ENCODE measurements at regions of chr19 and their contacts with region 1.

Region 1: DNA sequence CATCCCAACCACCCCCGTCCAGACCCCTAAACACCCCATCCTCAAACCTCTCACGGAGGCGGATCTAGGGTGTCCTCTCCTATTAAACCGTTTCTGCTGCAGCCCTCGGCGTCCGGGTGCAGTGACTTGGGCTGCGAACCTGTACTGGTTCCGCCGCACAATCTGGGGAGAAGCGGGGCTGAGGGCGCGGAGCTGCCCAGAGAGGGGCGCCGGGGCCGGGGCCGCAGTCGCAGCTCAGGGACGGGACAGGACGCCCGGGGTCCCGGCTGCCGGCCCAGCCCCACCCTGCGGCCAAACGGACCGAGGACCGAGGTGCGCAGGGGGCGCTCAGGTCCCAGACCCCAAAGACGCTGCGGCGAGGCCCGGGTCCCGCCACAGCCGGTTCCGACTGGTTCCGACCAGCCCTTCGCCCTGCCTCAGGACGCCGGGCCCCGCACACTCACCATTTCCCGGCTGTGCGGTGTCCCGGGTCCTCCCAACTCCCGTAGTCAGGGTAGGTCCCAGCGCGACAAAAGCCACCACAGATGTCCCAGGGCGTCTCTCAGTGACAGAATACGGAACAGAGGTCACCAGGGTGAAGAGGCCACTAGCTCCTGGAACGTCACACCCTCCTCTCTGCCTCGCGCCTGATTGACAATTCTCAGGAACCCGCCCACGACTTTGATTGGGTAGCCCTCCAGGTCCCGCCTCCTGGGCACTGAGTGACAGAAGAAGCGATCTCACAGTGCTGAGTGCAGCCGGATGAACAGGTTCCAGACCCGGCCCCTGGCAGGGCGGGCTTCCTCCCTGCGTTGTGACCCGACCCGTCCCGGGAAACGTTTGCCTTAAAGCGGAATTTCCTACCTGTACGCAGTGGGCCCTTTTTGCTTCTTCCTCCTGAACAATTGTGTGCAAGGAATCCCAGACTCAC is at the start of gene ZNF44:
- DNase-seq: peak; percentile 100
- H3K4me3 ChIP-seq: peak within 1 kb of the TSS; percentile 84 to 96 (median 92)
- H3K27ac ChIP-seq: peak within 1 kb of the TSS; percentile 90 to 98 (median 94)
- H3K4me1 ChIP-seq: peaks cover 25 to 51% (median 40%) of the 10 kb centered on the region in 4 donors
- H3K27me3 ChIP-seq: no peaks in the 10 kb centered on the region
- CTCF ChIP-seq: no peak
- EP300 ChIP-seq: no peak
- POLR2A ChIP-seq: no peak
- total RNA-seq, gene ZNF44: 8.8 to 9.7 (median 9.4) TPM

Region 2: DNA sequence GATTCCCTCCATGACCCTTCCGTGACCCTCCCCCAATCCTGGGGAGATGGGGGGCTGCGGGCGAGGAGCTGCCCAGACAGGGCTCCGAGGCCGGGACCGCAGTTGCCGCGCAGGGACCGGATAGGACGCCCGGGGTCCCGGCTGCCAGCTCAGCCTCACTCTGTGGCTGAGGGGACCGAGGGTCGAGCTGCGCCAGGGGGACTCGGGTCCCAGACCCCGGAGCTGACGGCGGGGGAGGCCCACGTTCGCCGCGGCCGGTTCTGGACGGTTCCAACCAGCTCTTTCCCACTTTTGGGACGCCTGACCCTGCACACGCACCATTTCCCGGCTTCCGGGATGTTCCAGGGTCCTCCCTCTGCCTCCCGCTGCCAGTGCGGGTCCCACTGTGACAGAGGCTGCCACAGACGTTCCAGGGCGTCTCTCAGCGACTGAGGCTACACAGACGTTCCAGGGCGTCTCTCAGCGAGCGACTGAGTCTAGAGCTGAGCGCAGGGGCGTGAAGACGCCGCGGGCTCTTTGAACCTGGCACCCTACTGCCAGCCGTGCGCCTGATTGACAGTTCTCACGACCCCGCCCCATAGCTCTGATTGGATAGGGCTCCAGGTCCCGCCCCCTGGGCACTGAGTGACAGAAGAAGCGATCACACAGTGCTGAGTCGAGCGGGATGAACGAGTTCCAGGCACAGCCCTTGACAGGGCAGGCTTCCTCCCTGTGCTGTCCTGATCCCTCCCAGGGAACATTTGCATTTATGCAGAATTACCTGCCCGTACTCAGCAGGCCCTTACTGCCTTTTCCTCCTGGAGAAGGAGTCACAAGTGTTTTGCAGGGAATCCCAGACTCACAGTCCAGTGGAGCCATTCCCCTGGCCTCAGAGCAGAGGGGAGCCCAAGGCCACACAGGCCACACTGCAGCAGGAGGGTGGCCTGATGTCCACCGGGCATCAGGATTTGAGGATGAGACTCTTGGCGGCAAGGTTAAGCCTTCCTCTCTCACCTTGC is 39.0 kb after region 1 on chr19 and contains the start of gene ZNF563:
- intact Hi-C with region 1: loop called (anchors 2 kb)
- DNase-seq: peak; percentile 100
- H3K4me3 ChIP-seq: peak within 1 kb of the TSS; percentile 71 to 89 (median 82)
- H3K27ac ChIP-seq: peak within 1 kb of the TSS; percentile 86 to 95 (median 93)
- H3K4me1 ChIP-seq: peaks cover 11 to 23% (median 16%) of the 10 kb centered on the region in 4 donors
- H3K27me3 ChIP-seq: no peaks in the 10 kb centered on the region
- CTCF ChIP-seq: no peak
- EP300 ChIP-seq: no peak
- POLR2A ChIP-seq: peak; percentile 50
- total RNA-seq, gene ZNF563: 2.3 to 3.4 (median 2.9) TPM

Region 3: GRCh38 chr19:12365236-12366162 is 71.0 kb after region 1 on chr19 and contains the start of gene ZNF442:
- intact Hi-C with region 1: loop called (anchors 2 kb)
- DNase-seq: peak; percentile 99
- H3K4me3 ChIP-seq: peak within 1 kb of the TSS; percentile 65 to 96 (median 82)
- H3K27ac ChIP-seq: peak within 1 kb of the TSS; percentile 84 to 98 (median 90)
- H3K4me1 ChIP-seq: peaks cover 15 to 22% (median 18%) of the 10 kb centered on the region in 4 donors
- H3K27me3 ChIP-seq: no peaks in the 10 kb centered on the region
- CTCF ChIP-seq: peak; percentile 54 to 83 (median 76)
- EP300 ChIP-seq: peak; percentile 18
- POLR2A ChIP-seq: peak; percentile 64
- total RNA-seq, gene ZNF442: 3.3 to 4.6 (median 3.6) TPM

Region 4: GRCh38 chr19:12494260-12494860 is 199.9 kb after region 1 on chr19:
- intact Hi-C with region 1: loop called (anchors 5 kb)
- DNase-seq: no peak
- H3K4me3 ChIP-seq: peak overlapping the region; percentile 59 to 85 (median 74)
- H3K27ac ChIP-seq: peak overlapping the region; percentile 77 to 88 (median 86)
- H3K4me1 ChIP-seq: peaks cover 0 to 12% (median 8%) of the 10 kb centered on the region in 4 donors
- H3K27me3 ChIP-seq: no peaks in the 10 kb centered on the region
- CTCF ChIP-seq: no peak
- EP300 ChIP-seq: no peak
- POLR2A ChIP-seq: no peak